Activated CD8-positive, alpha-beta T cell treated with anti-CD3 and anti-CD28 coated beads for 36 hours (primary cell): ENCODE measurements at regions of chr11 and their contacts with region 1.

Region 1: GRCh38 chr11:36131721-36132397 is 157.4 kb downstream of the COMMD9 start:
- DNase-seq: peak; percentile 34
- ATAC-seq: peak; percentile 45
- H3K4me3 Mint-ChIP-seq: no peak overlapping the region
- H3K27ac Mint-ChIP-seq: no peak overlapping the region
- H3K4me1 Mint-ChIP-seq: no peaks in the 10 kb centered on the region
- H3K27me3 Mint-ChIP-seq: peaks cover 9% of the 10 kb centered on the region
- CTCF ChIP-seq: peak; percentile 43

Region 2: GRCh38 chr11:35617687-35618496 is 514.0 kb before region 1 on chr11 and contains the start of gene FJX1:
- CTCF ChIA-PET with region 1: interaction called, 13 read pairs
- POLR2A ChIA-PET with region 1: no interaction called
- intact Hi-C with region 1: no loop called
- DNase-seq: peak; percentile 34
- ATAC-seq: peak; percentile 19
- H3K4me3 Mint-ChIP-seq: peak within 1 kb of the TSS; percentile 66
- H3K27ac Mint-ChIP-seq: no peak within 1 kb of the TSS
- H3K4me1 Mint-ChIP-seq: peaks cover 8% of the 10 kb centered on the region
- H3K27me3 Mint-ChIP-seq: peaks cover 49% of the 10 kb centered on the region
- CTCF ChIP-seq: no peak
- total RNA-seq, gene FJX1: 1.4 to 2.1 TPM

Region 3: GRCh38 chr11:35997902-35998525 is 133.8 kb before region 1 on chr11:
- CTCF ChIA-PET with region 1: no interaction called
- POLR2A ChIA-PET with region 1: no interaction called
- intact Hi-C with region 1: no loop called
- DNase-seq: no peak
- ATAC-seq: no peak
- H3K4me3 Mint-ChIP-seq: no peak overlapping the region
- H3K27ac Mint-ChIP-seq: no peak overlapping the region
- H3K4me1 Mint-ChIP-seq: no peaks in the 10 kb centered on the region
- H3K27me3 Mint-ChIP-seq: peaks cover 16% of the 10 kb centered on the region
- CTCF ChIP-seq: no peak

Region 4: GRCh38 chr11:36289226-36289852 is 157.5 kb after region 1 on chr11 and contains the start of gene COMMD9:
- CTCF ChIA-PET with region 1: no interaction called
- POLR2A ChIA-PET with region 1: no interaction called
- intact Hi-C with region 1: no loop called
- DNase-seq: peak; percentile 98
- ATAC-seq: peak; percentile 99
- H3K4me3 Mint-ChIP-seq: peak within 1 kb of the TSS; percentile 82
- H3K27ac Mint-ChIP-seq: peak within 1 kb of the TSS; percentile 86
- H3K4me1 Mint-ChIP-seq: peaks cover 29% of the 10 kb centered on the region
- H3K27me3 Mint-ChIP-seq: no peaks in the 10 kb centered on the region
- CTCF ChIP-seq: no peak
- total RNA-seq, gene COMMD9: 34.8 to 36.8 TPM

Region 5: GRCh38 chr11:36390963-36391471 is 259.2 kb after region 1 on chr11:
- CTCF ChIA-PET with region 1: no interaction called
- POLR2A ChIA-PET with region 1: no interaction called
- intact Hi-C with region 1: no loop called
- DNase-seq: peak; percentile 37
- ATAC-seq: peak; percentile 45
- H3K4me3 Mint-ChIP-seq: no peak overlapping the region
- H3K27ac Mint-ChIP-seq: peak overlapping the region; percentile 73
- H3K4me1 Mint-ChIP-seq: peaks cover 54% of the 10 kb centered on the region
- H3K27me3 Mint-ChIP-seq: peaks cover 10% of the 10 kb centered on the region
- CTCF ChIP-seq: no peak